AG04449 (cell line): ENCODE measurements at regions of chr16 and their contacts with region 1.

Region 1: GRCh38 chr16:73176577-73177013 is 128.7 kb upstream of the ZFHX3 start:
- DNase-seq: peak; percentile 90
- H3K4me3 ChIP-seq: no peak overlapping the region
- CTCF ChIP-seq: peak; percentile 47

Region 2: DNA sequence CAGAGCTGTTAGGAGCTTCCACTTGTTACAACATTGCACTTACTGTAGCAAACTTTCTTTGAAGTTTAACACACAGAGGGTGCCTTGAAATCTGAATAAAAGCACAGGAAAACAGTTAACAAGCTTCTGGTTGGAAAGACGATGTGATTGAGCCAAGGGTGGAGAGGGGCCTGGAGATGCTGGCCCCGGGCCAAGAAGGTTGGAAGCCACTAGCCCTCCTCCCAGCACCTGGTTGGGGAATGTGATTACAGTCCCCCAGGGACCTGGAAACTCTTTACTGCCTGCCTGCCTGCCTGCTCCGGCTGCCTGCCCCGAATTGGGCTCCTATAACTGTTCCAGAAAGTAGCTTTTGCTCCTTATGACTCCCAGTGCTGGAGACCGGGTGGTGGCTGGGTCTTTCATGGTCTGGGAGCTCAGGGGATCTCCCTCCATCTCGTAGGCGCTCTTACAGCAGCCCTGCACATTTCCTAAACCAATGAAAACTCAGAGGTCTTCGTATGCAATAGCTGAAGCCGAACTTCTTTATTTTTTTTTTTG is 80.6 kb before region 1 on chr16:
- CTCF ChIA-PET with region 1: no interaction called
- POLR2A ChIA-PET with region 1: no interaction called
- DNase-seq: no peak
- H3K4me3 ChIP-seq: no peak overlapping the region
- CTCF ChIP-seq: no peak

Region 3: DNA sequence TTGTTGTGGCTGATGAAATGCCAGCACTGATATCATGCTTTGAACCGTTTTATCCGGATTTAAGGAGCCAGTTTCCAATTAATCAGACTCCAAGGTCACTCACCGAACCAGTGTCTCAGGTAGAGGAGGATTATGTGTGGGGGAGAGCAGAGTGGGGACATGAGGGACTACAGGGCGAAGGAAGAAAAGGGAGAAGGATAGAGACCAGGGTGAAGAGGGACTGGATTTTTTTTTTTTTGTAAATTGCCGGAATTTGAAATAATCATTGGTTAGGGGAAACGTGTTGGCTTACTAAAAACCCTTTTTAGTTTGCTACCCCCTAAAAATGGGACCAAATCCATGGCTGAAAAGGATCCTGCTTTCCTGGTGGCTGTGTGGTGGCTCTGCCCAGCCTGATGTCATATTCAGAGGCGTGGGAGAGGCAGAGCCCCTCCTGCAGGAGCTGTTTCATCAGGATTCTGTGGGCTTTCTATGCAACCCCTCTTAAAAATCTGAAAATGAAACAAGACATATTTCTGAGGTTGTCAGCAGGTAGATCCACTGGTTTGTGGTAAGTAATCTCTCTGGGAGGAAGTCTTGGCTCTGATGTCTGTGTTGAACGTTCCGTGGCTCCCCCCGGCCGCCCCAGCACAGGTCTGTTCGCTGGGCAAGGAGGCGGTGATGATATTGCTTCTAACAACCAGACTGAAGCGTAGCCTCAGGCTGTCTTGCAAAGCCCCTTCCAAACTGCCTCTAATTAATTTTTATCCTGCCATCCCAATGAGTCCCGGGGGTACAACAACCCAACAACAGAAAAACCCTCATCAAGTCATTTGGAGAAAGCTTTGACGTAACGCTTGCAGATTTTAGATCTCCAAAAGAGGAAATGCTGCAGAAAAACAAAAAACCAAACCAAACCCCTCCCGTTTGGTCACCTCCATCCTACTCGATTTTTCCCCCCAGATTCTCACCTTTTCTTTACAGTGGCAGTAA is 14.4 kb after region 1 on chr16:
- CTCF ChIA-PET with region 1: interaction called, 12 read pairs
- POLR2A ChIA-PET with region 1: no interaction called
- DNase-seq: no peak
- H3K4me3 ChIP-seq: no peak overlapping the region
- CTCF ChIP-seq: no peak

Region 4: GRCh38 chr16:73383195-73383987 is 206.8 kb after region 1 on chr16:
- CTCF ChIA-PET with region 1: no interaction called
- POLR2A ChIA-PET with region 1: no interaction called
- DNase-seq: no peak
- H3K4me3 ChIP-seq: no peak overlapping the region
- CTCF ChIP-seq: no peak

Region 5: GRCh38 chr16:73457851-73458250 is 281.3 kb after region 1 on chr16:
- CTCF ChIA-PET with region 1: no interaction called
- POLR2A ChIA-PET with region 1: no interaction called
- DNase-seq: no peak
- H3K4me3 ChIP-seq: no peak overlapping the region
- CTCF ChIP-seq: no peak